Activated CD4-positive, alpha-beta T cell treated with anti-CD3 and anti-CD28 coated beads for 36 hours (primary cell): ENCODE measurements at regions of chr19 and their contacts with region 1.

Region 1: GRCh38 chr19:52942386-52943133 is 19.3 kb upstream of the ZNF888 start:
- DNase-seq: peak; percentile 97
- ATAC-seq: peak; percentile 99
- H3K4me3 Mint-ChIP-seq: peak overlapping the region; percentile 90
- H3K27ac Mint-ChIP-seq: peak overlapping the region; percentile 91
- H3K4me1 Mint-ChIP-seq: peaks cover 18% of the 10 kb centered on the region
- H3K27me3 Mint-ChIP-seq: no peaks in the 10 kb centered on the region

Region 2: DNA sequence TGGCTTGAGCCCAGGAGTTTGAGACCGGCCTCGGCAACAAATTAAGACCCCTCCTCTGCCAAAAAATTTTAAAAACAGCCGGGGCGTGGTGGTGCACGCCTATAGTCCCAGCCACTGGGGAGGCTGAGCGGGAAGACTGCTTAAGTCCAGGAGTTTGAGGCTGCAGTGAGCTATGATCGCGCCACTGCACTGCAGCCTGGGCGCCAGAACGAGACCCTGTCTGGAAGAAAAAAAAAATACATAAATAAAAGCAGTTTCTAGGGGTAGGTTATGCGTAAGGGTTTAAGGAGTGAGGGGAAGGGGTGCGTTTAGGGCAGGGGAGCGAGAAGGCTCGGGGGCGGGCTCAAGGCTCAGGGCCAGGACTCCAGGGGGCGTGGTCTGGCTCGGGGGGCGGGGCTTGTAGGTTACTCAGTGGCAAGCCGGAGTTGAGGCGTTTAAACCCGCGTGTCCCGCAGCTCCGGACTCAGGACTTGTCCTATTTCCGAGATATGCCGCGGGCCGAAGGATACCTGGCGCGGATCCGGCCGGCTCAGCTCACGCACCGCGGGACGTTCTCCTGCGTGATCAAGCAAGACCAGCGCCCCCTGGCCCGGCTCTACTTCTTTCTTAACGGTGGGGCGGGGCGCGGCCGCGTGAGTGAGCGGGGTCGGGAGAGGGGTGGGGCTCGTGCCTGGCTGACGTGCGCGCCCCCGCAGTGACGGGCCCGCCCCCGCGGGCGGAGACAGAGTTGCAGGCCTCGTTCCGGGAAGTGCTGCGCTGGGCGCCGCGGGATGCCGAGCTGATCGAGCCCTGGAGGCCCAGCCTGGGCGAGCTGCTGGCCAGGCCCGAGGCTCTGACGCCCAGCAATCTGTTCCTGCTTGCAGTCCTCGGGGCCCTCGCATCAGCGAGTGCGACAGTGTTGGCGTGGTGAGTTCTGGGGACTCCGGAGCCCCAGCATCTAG is 1238.7 kb before region 1 on chr19:
- CTCF ChIA-PET with region 1: no interaction called
- POLR2A ChIA-PET with region 1: no interaction called
- intact Hi-C with region 1: loop called in 1 of 2 experiments (anchors 5 kb)
- DNase-seq: peak; percentile 98
- ATAC-seq: peak; percentile 88
- H3K4me3 Mint-ChIP-seq: peak overlapping the region; percentile 94
- H3K27ac Mint-ChIP-seq: peak overlapping the region; percentile 95
- H3K4me1 Mint-ChIP-seq: peaks cover 33% of the 10 kb centered on the region
- H3K27me3 Mint-ChIP-seq: peaks cover 5% of the 10 kb centered on the region

Region 3: DNA sequence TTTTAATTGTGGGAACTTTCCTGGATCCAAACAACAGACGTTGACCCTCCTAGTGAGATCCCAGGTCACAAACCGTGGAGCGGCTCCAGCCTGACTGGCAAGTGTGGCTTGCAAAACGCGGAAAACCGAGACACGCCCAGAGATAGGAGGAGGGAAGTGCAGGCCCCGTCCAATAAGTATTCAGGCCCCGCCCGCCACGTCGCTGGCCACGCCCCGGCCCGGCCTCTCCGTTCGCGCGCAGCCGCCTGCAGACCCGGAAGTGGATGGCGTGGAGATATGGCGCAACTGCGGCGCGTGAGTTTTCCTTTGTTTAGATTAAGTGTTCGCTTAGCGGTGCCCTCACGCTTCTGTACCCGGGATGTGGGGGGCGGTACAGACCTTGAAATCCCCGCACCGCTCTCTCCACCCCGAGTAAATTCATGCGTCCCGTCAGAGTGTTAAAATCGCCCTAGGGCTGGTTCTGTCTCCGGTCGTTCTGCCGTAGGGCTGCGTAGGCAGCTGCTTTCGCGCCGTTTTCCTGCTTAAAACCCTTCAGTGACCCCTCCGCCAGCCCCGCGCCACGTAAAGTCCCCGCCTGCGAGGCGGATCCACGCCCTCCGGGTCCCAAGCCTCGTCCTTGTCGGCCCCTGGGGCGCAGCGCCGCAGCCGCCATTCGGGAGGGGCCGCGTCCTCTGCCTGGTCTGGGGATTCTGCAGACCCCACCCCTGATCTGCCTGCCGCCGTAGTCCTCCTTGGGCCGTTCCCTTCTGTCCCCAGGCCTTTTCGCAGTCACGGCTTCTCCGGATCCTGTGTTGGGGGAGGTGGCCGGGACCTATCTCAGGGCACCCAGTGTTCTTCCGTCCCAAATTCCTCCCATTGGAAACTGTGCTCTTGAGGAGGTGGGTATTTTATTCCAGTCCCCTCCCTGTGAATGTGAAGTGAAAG is 673.0 kb before region 1 on chr19 and contains the start of gene ZNF766:
- CTCF ChIA-PET with region 1: no interaction called
- POLR2A ChIA-PET with region 1: no interaction called
- intact Hi-C with region 1: loop called in 1 of 2 experiments (anchors 2 kb)
- DNase-seq: peak; percentile 98
- ATAC-seq: peak; percentile 99
- H3K4me3 Mint-ChIP-seq: peak within 1 kb of the TSS; percentile 96
- H3K27ac Mint-ChIP-seq: peak within 1 kb of the TSS; percentile 96
- H3K4me1 Mint-ChIP-seq: peaks cover 35% of the 10 kb centered on the region
- H3K27me3 Mint-ChIP-seq: no peaks in the 10 kb centered on the region
- total RNA-seq, gene ZNF766: 28.6 to 34.2 TPM

Region 4: DNA sequence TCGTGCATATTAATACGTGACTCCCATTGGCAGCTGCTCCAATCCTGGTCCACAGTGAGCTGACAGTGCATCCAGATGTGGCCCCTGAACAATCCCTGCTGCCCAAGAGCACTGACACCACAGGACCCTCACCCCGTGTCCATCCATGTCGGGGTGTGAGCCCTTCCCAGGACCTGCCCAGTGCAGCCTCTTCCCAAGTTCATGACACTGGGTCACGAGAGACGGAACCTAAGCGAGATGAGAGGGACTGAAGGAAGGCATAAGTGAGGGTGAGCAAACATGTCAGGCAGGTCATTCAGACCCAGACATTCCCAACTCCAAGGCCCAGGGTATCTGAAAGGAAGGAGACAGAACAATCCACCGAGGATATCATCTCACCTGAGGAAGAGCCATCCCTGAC is 88.7 kb before region 1 on chr19:
- CTCF ChIA-PET with region 1: no interaction called
- POLR2A ChIA-PET with region 1: no interaction called
- intact Hi-C with region 1: loop called in 1 of 2 experiments (anchors 5 kb)
- DNase-seq: no peak
- ATAC-seq: no peak
- H3K4me3 Mint-ChIP-seq: no peak overlapping the region
- H3K27ac Mint-ChIP-seq: no peak overlapping the region
- H3K4me1 Mint-ChIP-seq: peaks cover 23% of the 10 kb centered on the region
- H3K27me3 Mint-ChIP-seq: no peaks in the 10 kb centered on the region

Region 5: DNA sequence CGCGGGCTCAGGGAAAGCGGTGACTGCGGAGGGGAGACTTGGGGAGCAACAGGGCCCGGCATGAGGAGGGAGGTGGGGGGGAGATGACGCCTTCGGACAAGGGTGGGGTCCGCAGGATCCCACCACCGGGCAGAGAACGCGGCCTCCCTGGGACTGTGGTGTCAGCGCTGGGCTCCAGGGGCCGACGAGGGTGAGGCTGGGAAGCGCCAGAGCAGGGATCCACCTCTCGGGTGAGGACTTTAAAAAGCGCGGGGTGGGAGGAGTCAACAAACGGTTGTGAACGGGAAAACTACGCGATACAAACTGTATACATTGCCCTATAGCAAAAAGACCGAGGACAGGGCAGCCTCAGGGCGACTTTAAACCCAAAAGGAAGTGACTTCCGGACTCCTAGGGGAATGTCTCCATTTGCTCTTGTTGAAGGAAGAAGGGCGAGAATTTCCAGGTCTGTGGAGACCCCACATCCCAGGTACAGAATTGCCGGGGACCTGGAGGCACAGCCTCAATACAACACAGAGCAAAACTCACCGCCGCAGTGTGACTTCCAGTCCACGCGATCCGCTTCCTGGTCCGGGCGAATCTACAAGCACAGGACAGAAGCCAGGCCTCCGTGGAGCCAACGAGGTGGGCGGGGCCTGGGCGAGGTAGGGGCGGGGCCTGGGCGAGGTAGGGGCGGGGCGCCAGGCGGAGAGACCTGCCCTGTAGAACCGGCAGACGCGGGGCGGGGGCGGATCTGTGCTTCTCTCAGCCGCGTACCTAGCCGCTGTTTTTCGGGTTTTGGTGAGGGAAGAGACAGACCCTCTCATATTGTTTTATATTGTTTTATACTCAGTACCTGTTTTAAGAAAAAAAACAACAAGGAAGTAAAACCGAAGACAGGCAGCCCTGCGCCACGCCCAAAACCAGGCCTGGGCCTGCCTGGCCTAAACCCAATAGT is 19.5 kb before region 1 on chr19 and contains the start of gene ZNF888:
- CTCF ChIA-PET with region 1: no interaction called
- POLR2A ChIA-PET with region 1: no interaction called
- intact Hi-C with region 1: loop called in 1 of 2 experiments (anchors 1 kb)
- DNase-seq: peak; percentile 96
- ATAC-seq: peak; percentile 100
- H3K4me3 Mint-ChIP-seq: peak within 1 kb of the TSS; percentile 89
- H3K27ac Mint-ChIP-seq: peak within 1 kb of the TSS; percentile 94
- H3K4me1 Mint-ChIP-seq: peaks cover 23% of the 10 kb centered on the region
- H3K27me3 Mint-ChIP-seq: no peaks in the 10 kb centered on the region
- total RNA-seq, gene ZNF888: 5.1 to 5.5 TPM

Region 6: GRCh38 chr19:53333463-53334449 is 391.2 kb after region 1 on chr19 and contains the start of gene ZNF845:
- CTCF ChIA-PET with region 1: no interaction called
- POLR2A ChIA-PET with region 1: no interaction called
- intact Hi-C with region 1: loop called in 1 of 2 experiments (anchors 2 kb)
- DNase-seq: peak; percentile 97
- ATAC-seq: peak; percentile 99
- H3K4me3 Mint-ChIP-seq: peak within 1 kb of the TSS; percentile 88
- H3K27ac Mint-ChIP-seq: peak within 1 kb of the TSS; percentile 92
- H3K4me1 Mint-ChIP-seq: peaks cover 10% of the 10 kb centered on the region
- H3K27me3 Mint-ChIP-seq: peaks cover 5% of the 10 kb centered on the region
- total RNA-seq, gene ZNF845: 5.9 to 6.3 TPM